PC-3 (cell line): ENCODE measurements at regions of chr10 and their contacts with region 1.

Region 1: DNA sequence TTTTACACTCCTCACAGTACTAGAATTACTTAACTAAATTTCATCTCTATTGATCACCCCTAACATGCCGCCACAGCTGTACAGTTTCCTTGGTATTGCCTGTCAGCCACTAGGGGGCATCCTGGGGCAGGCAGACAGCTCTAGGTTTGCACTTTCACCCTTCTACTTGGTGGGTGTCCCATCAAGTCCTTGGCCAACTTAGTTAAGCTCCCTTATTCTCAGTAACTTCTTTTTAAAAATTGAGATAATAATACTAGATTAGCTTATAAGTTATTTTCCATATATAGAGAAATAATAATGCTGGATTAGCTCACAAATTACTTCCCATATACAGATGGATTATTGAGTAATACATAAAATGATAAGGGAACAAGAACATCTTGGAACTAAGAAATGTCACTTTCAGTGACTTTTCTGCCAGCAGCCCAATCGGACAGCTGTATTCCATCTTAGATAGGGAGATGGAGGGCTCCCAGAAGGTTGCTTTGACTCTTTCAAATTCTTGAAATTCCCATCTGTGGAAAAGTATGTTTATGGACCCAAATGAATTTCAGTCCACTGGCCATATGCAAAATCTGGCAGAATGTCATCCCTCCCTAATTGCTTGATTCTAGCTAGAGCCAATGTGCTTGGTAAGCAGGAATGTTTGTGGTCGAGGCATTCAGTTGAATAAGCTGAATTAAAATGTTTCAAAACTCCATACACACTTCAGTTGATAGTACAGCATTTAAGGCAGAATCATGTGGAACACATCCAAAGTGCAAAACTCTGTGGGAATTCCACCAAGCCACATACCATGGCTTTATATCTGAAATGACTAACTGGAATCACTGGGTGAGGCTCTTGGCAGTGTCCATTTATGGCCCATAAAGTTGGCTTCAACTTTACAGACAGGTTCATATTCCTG is 309.7 kb downstream of the CSTF2T start:
- DNase-seq: peak; percentile 100
- ATAC-seq: peak; percentile 96
- H3K4me3 ChIP-seq: no peak overlapping the region
- H3K27ac ChIP-seq: peak overlapping the region; percentile 77
- H3K4me1 ChIP-seq: peaks cover 33% of the 10 kb centered on the region
- H3K27me3 ChIP-seq: no peaks in the 10 kb centered on the region
- CTCF ChIP-seq: peak; percentile 100

Region 2: GRCh38 chr10:51214207-51215196 is 175.2 kb before region 1 on chr10:
- CTCF ChIA-PET with region 1: no interaction called
- POLR2A ChIA-PET with region 1: no interaction called
- intact Hi-C with region 1: no loop called
- DNase-seq: no peak
- ATAC-seq: no peak
- H3K4me3 ChIP-seq: no peak overlapping the region
- H3K27ac ChIP-seq: no peak overlapping the region
- H3K4me1 ChIP-seq: no peaks in the 10 kb centered on the region
- H3K27me3 ChIP-seq: no peaks in the 10 kb centered on the region
- CTCF ChIP-seq: no peak

Region 3: DNA sequence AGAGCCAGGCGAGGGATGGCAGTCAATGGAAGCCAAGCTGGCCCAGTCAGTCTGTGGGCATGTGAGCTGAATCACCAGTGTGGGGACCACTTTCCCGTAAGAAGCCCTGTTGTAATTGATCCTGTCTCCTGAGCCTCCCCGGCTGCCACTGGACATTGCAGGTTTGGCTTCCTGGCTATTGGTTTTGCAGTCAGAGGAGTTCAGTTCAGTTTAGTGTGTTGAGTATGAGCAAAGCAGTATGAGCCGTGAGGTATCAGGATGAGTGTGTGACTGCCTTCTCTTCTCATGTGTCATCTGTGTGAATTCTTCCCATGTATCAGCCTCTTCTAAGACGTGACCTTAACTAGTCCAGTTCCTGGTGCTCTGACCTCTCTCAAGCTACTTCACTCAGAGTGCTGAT is 88.0 kb before region 1 on chr10:
- CTCF ChIA-PET with region 1: no interaction called
- POLR2A ChIA-PET with region 1: no interaction called
- intact Hi-C with region 1: loop called (anchors 1 kb)
- DNase-seq: no peak
- ATAC-seq: no peak; the same call in 1 of the 2 replicates
- H3K4me3 ChIP-seq: no peak overlapping the region
- H3K27ac ChIP-seq: no peak overlapping the region
- H3K4me1 ChIP-seq: peaks cover 17% of the 10 kb centered on the region
- H3K27me3 ChIP-seq: no peaks in the 10 kb centered on the region
- CTCF ChIP-seq: no peak

Region 4: GRCh38 chr10:51340845-51341610 is 48.6 kb before region 1 on chr10:
- CTCF ChIA-PET with region 1: no interaction called
- POLR2A ChIA-PET with region 1: no interaction called
- intact Hi-C with region 1: loop called (anchors 2 kb)
- DNase-seq: peak; percentile 91
- ATAC-seq: peak; percentile 100
- H3K4me3 ChIP-seq: no peak overlapping the region
- H3K27ac ChIP-seq: peak overlapping the region; percentile 4
- H3K4me1 ChIP-seq: peaks cover 15% of the 10 kb centered on the region
- H3K27me3 ChIP-seq: no peaks in the 10 kb centered on the region
- CTCF ChIP-seq: no peak

Region 5: GRCh38 chr10:51468424-51468823 is 78.8 kb after region 1 on chr10:
- CTCF ChIA-PET with region 1: no interaction called
- POLR2A ChIA-PET with region 1: no interaction called
- intact Hi-C with region 1: loop called (anchors 1 kb)
- DNase-seq: peak; percentile 98
- ATAC-seq: peak; percentile 86
- H3K4me3 ChIP-seq: no peak overlapping the region
- H3K27ac ChIP-seq: peak overlapping the region; percentile 43
- H3K4me1 ChIP-seq: peaks cover 31% of the 10 kb centered on the region
- H3K27me3 ChIP-seq: no peaks in the 10 kb centered on the region
- CTCF ChIP-seq: no peak

Region 6: GRCh38 chr10:51699475-51700227 is 310.0 kb after region 1 on chr10 and contains the start of gene CSTF2T:
- CTCF ChIA-PET with region 1: no interaction called
- POLR2A ChIA-PET with region 1: no interaction called
- intact Hi-C with region 1: no loop called
- DNase-seq: peak; percentile 99
- ATAC-seq: peak; percentile 91
- H3K4me3 ChIP-seq: peak within 1 kb of the TSS; percentile 74
- H3K27ac ChIP-seq: peak within 1 kb of the TSS; percentile 78
- H3K4me1 ChIP-seq: peaks cover 32% of the 10 kb centered on the region
- H3K27me3 ChIP-seq: no peaks in the 10 kb centered on the region
- CTCF ChIP-seq: no peak
- total RNA-seq, gene CSTF2T: 41.7 and 45.2 TPM in 2 replicates

Region 7: GRCh38 chr10:51804866-51805265 is 415.2 kb after region 1 on chr10:
- CTCF ChIA-PET with region 1: no interaction called
- POLR2A ChIA-PET with region 1: no interaction called
- intact Hi-C with region 1: loop called (anchors 5 kb)
- DNase-seq: peak; percentile 96
- ATAC-seq: peak; percentile 89
- H3K4me3 ChIP-seq: no peak overlapping the region
- H3K27ac ChIP-seq: peak overlapping the region; percentile 79
- H3K4me1 ChIP-seq: peaks cover 31% of the 10 kb centered on the region
- H3K27me3 ChIP-seq: no peaks in the 10 kb centered on the region
- CTCF ChIP-seq: no peak